HCT116 (cell line): ENCODE measurements at regions of chr7 and their contacts with region 1.

Region 1: GRCh38 chr7:20778063-20778721 is 8.5 kb downstream of the SP8 start:
- DNase-seq: no peak
- ATAC-seq: peak; percentile 100
- H3K4me3 ChIP-seq: peak overlapping the region; percentile 3 to 12; a peak in 3 of 4 replicates
- H3K27ac ChIP-seq: no peak overlapping the region
- H3K4me1 ChIP-seq: peaks cover 0 to 10% of the 10 kb centered on the region in 2 experiments; a peak in 2 of 4 replicates
- H3K27me3 ChIP-seq: no peaks in the 10 kb centered on the region; the same call in 1 of the 2 replicates
- CTCF ChIP-seq: peak; percentile 32 to 63 (median 58); a peak in 5 of 6 replicates
- POLR2A ChIP-seq: no peak
- RAD21 ChIP-seq: peak; percentile 76

Region 2: DNA sequence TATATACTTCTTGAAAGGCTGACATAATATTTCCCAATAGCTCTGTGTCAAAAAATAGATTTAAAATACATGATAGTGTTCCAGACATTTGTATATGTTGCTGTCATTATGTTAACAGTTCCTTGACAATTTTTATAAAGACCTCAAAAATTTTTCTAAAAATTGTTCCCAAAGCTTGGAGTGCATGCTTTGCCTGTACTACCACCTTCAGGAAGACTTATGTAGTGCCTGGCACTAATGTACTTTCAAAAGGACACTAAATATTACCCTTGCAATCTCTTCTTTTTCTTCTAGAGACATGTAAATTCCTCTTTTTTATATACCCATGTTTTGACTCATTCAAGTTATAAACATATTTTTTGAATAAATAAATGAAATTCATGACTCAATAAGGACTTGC is 56.5 kb after region 1 on chr7:
- CTCF ChIA-PET with region 1: interaction called, 5 read pairs
- POLR2A ChIA-PET with region 1: no interaction called
- RAD21 ChIA-PET with region 1: no interaction called
- intact Hi-C with region 1: loop called (anchors 1 kb)
- DNase-seq: no peak
- ATAC-seq: peak; percentile 52; the same call in 1 of the 2 replicates
- H3K4me3 ChIP-seq: no peak overlapping the region
- H3K27ac ChIP-seq: no peak overlapping the region
- H3K4me1 ChIP-seq: no peaks in the 10 kb centered on the region
- H3K27me3 ChIP-seq: no peaks in the 10 kb centered on the region
- CTCF ChIP-seq: peak; percentile 8 to 61 (median 48); a peak in 4 of 6 replicates
- POLR2A ChIP-seq: no peak
- RAD21 ChIP-seq: peak; percentile 65

Region 3: DNA sequence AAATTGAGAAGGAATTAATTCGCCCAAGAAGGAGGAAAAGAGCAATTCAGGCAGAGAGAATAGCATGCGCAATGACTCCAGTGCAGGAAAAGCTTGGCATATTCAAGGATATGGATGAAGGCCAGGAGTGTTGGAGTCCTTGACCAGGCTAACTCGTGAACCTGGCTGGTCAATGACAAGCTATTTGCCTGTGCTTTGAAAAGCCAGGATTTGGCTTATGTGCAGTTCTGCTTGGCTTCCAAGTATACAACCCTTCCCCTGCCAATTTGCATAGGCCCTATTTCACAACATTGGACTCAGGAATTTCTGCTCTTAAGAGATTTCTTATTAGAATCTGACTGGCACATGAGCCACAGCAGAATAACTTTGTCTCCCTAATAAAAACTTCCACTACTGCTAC is 80.8 kb after region 1 on chr7:
- CTCF ChIA-PET with region 1: no interaction called
- POLR2A ChIA-PET with region 1: no interaction called
- RAD21 ChIA-PET with region 1: no interaction called
- intact Hi-C with region 1: no loop called
- DNase-seq: no peak
- ATAC-seq: no peak
- H3K4me3 ChIP-seq: no peak overlapping the region
- H3K27ac ChIP-seq: no peak overlapping the region
- H3K4me1 ChIP-seq: no peaks in the 10 kb centered on the region
- H3K27me3 ChIP-seq: no peaks in the 10 kb centered on the region
- CTCF ChIP-seq: no peak
- POLR2A ChIP-seq: no peak
- RAD21 ChIP-seq: no peak

Region 4: DNA sequence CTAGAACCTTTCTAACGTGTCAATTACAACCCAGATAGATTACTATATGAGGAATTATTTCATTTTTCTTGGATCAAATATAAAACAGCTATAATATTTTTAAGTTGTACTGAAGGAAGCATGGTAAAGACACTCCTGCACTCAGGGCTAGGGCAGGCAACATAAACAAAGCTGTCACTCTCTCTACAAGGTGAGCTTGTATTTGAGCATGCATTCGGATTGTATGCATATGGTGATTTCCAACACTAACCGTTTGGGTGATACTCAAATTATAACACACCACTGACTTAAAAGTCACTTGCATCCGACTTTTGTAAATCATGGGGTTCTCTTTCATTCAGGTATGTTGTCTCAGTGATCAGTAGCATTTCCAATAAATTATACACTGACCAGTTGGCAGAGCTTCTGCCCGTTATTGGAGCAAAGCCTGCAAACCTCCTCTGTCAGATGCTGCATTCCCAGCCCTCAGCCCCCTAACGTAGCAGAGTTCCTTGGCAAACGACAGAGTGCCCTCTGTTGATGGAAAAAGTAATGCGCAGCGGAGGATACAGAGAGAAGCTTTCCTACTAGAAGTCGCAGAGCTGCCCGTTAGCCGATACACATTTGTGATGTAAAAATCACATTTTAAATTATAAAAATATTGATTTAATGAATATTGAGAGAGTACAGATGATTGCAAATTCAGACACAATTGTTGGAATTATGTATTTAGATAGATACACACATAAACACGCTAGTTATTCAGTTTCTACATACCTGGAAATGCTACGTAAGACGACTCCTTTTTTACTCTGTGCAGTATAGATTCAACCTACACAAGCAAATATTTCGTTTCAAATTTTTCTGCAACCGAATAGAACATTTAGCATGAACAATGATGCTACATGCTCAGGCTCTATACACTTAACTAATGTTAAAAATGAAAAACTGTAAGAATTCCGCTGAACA is 475.8 kb after region 1 on chr7:
- CTCF ChIA-PET with region 1: interaction called, 6 read pairs
- POLR2A ChIA-PET with region 1: no interaction called
- RAD21 ChIA-PET with region 1: no interaction called
- intact Hi-C with region 1: loop called (anchors 1 kb)
- DNase-seq: peak; percentile 51
- ATAC-seq: peak; percentile 93
- H3K4me3 ChIP-seq: no peak overlapping the region
- H3K27ac ChIP-seq: no peak overlapping the region
- H3K4me1 ChIP-seq: no peaks in the 10 kb centered on the region
- H3K27me3 ChIP-seq: peaks cover 25% of the 10 kb centered on the region
- CTCF ChIP-seq: peak; percentile 67 to 74 (median 70); a peak in 5 of 6 replicates
- POLR2A ChIP-seq: no peak
- RAD21 ChIP-seq: peak; percentile 81

Region 5: GRCh38 chr7:21497072-21497471 is 718.9 kb after region 1 on chr7:
- CTCF ChIA-PET with region 1: no interaction called
- POLR2A ChIA-PET with region 1: no interaction called
- RAD21 ChIA-PET with region 1: no interaction called
- intact Hi-C with region 1: loop called (anchors 5 kb)
- DNase-seq: peak; percentile 16
- ATAC-seq: peak; percentile 85
- H3K4me3 ChIP-seq: no peak overlapping the region
- H3K27ac ChIP-seq: no peak overlapping the region
- H3K4me1 ChIP-seq: no peaks in the 10 kb centered on the region
- H3K27me3 ChIP-seq: no peaks in the 10 kb centered on the region
- CTCF ChIP-seq: peak; percentile 42 to 80 (median 77); a peak in 5 of 6 replicates
- POLR2A ChIP-seq: no peak
- RAD21 ChIP-seq: peak; percentile 59

Region 6: GRCh38 chr7:22082886-22083703 is 1304.9 kb after region 1 on chr7:
- CTCF ChIA-PET with region 1: no interaction called
- POLR2A ChIA-PET with region 1: no interaction called
- RAD21 ChIA-PET with region 1: no interaction called
- intact Hi-C with region 1: loop called (anchors 5 kb)
- DNase-seq: peak; percentile 53
- ATAC-seq: peak; percentile 95
- H3K4me3 ChIP-seq: peak overlapping the region; percentile 61 to 63
- H3K27ac ChIP-seq: peak overlapping the region; percentile 52
- H3K4me1 ChIP-seq: peaks cover 10 to 16% of the 10 kb centered on the region in 2 experiments; a peak in 3 of 4 replicates
- H3K27me3 ChIP-seq: no peaks in the 10 kb centered on the region
- CTCF ChIP-seq: peak; percentile 81 to 98 (median 88)
- POLR2A ChIP-seq: no peak
- RAD21 ChIP-seq: peak; percentile 90